H1 (cell line): ENCODE measurements at regions of chr5 and their contacts with region 1.

Region 1: GRCh38 chr5:38922199-38922598 is 76.4 kb downstream of the OSMR start:
- DNase-seq: peak in 1 of 2 experiments; percentile 64
- H3K4me3 ChIP-seq: no peak overlapping the region
- H3K27ac ChIP-seq: no peak overlapping the region
- H3K4me1 ChIP-seq: peaks cover 0 to 4% (median 2%) of the 10 kb centered on the region in 4 experiments; a peak in 2 of 7 replicates
- H3K27me3 ChIP-seq: no peaks in the 10 kb centered on the region
- CTCF ChIP-seq: peak; percentile 79 to 94 (median 94)
- EP300 ChIP-seq: no peak
- POLR2A ChIP-seq: no peak
- RAD21 ChIP-seq: peak; percentile 86 to 88

Region 2: DNA sequence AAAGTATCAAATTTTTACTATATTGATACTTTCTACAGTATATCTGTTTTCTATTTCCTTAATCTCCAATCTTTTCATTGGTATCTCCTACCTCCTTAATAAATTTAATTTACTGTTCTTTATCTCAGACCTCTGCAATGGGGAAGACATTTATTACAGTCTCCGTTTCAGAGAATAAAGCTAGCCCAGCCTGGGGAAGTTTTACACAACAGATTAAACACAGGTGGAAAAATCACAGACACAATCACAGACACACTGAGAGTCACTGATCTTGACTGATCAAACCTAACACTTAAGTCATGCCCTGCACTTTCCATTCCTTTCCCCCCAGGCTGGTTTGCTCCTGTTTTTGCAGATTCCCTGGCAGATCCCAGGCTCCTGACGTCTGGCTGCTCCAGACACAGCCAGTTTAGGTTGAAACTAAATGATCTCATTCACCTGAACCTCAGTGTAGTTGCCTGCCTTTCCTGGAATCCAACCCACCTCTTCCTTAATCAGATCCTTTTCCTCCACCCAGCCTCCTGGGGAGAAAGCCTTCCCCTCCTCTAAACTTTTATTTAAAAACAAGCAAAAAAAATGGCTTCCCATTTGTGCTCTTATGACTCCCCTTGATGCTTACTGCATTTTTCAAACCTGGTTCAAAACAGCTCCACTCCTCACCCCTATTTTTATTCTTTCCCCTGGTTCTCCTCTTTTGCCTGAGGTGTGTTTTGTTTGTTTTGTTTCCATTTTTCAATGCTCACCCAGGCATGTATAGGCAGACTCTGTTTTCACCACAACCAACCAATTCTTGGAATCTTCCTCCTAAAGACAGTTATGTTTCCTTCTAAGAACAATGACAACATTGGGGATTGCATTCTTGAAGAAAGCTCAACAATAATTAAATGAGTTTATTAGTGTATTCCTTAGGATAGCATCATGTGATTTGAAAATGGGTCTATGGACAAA is 105.8 kb before region 1 on chr5:
- CTCF ChIA-PET with region 1: interaction called, 10 read pairs
- POLR2A ChIA-PET with region 1: no interaction called
- DNase-seq: no peak
- H3K4me3 ChIP-seq: no peak overlapping the region
- H3K27ac ChIP-seq: no peak overlapping the region
- H3K4me1 ChIP-seq: peaks cover 0 to 2% (median 0%) of the 10 kb centered on the region in 4 experiments; a peak in 1 of 7 replicates
- H3K27me3 ChIP-seq: no peaks in the 10 kb centered on the region
- CTCF ChIP-seq: no peak
- EP300 ChIP-seq: no peak
- POLR2A ChIP-seq: no peak
- RAD21 ChIP-seq: no peak

Region 3: DNA sequence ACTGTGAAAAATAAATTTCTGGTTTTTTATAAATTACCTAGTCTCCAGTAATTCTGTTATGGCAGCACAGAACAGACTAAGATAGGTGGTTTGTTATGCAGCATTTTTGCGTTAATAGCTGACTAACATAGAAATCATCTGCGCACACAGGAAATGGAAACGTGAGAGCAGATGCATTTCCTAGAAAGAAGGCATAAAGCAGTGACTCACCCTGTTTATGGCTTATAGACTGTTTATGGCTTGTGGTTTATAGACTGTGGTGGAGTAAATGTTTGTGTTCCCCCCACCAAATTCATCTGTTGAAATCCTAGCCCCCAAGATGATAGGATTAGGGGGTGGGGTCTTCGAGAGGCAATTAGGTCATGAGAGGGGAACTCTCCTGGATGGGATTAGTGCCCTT is 94.7 kb before region 1 on chr5:
- CTCF ChIA-PET with region 1: interaction called, 19 read pairs
- POLR2A ChIA-PET with region 1: no interaction called
- DNase-seq: no peak
- H3K4me3 ChIP-seq: no peak overlapping the region
- H3K27ac ChIP-seq: no peak overlapping the region
- H3K4me1 ChIP-seq: no peaks in the 10 kb centered on the region
- H3K27me3 ChIP-seq: no peaks in the 10 kb centered on the region
- CTCF ChIP-seq: no peak
- EP300 ChIP-seq: no peak
- POLR2A ChIP-seq: no peak
- RAD21 ChIP-seq: no peak

Region 4: GRCh38 chr5:38837416-38837815 is 84.8 kb before region 1 on chr5:
- CTCF ChIA-PET with region 1: interaction called, 10 read pairs
- POLR2A ChIA-PET with region 1: no interaction called
- DNase-seq: no peak
- H3K4me3 ChIP-seq: no peak overlapping the region
- H3K27ac ChIP-seq: no peak overlapping the region
- H3K4me1 ChIP-seq: no peaks in the 10 kb centered on the region
- H3K27me3 ChIP-seq: no peaks in the 10 kb centered on the region
- CTCF ChIP-seq: no peak
- EP300 ChIP-seq: no peak
- POLR2A ChIP-seq: no peak
- RAD21 ChIP-seq: no peak

Region 5: GRCh38 chr5:38932854-38933408 is 10.7 kb after region 1 on chr5:
- CTCF ChIA-PET with region 1: interaction called, 12 read pairs
- POLR2A ChIA-PET with region 1: no interaction called
- DNase-seq: no peak
- H3K4me3 ChIP-seq: no peak overlapping the region
- H3K27ac ChIP-seq: no peak overlapping the region
- H3K4me1 ChIP-seq: no peaks in the 10 kb centered on the region
- H3K27me3 ChIP-seq: no peaks in the 10 kb centered on the region
- CTCF ChIP-seq: no peak
- EP300 ChIP-seq: no peak
- POLR2A ChIP-seq: no peak
- RAD21 ChIP-seq: no peak

Region 6: GRCh38 chr5:39005566-39006232 is 83.5 kb after region 1 on chr5:
- CTCF ChIA-PET with region 1: no interaction called
- POLR2A ChIA-PET with region 1: no interaction called
- DNase-seq: no peak
- H3K4me3 ChIP-seq: no peak overlapping the region
- H3K27ac ChIP-seq: no peak overlapping the region
- H3K4me1 ChIP-seq: no peaks in the 10 kb centered on the region
- H3K27me3 ChIP-seq: no peaks in the 10 kb centered on the region
- CTCF ChIP-seq: peak in 2 of 3 experiments; percentile 28 to 44; a peak in 2 of 4 replicates
- EP300 ChIP-seq: no peak
- POLR2A ChIP-seq: no peak
- RAD21 ChIP-seq: peak; percentile 64 to 66

Region 7: DNA sequence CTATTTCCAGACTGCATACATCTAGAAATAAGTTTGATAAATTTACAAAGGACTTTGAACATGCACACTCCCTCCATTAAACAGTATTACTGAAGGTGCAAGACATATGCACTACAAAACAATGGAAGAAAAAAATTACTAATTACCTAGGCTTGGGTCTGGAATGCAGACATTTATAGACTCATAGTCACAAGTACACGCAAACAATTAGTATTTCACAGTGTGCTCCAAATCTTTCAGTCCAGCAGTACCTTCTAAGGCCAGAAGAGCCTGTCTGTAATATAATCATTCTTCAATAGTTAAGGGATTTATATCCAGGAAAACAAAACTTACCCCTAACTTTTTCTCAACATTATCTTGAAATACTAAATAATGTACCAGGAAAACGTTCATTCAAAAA is 140.8 kb after region 1 on chr5:
- CTCF ChIA-PET with region 1: no interaction called
- POLR2A ChIA-PET with region 1: no interaction called
- DNase-seq: no peak
- H3K4me3 ChIP-seq: no peak overlapping the region
- H3K27ac ChIP-seq: no peak overlapping the region
- H3K4me1 ChIP-seq: peaks cover 0 to 1% (median under 1%) of the 10 kb centered on the region in 4 experiments; a peak in 2 of 7 replicates
- H3K27me3 ChIP-seq: no peaks in the 10 kb centered on the region
- CTCF ChIP-seq: no peak
- EP300 ChIP-seq: no peak
- POLR2A ChIP-seq: no peak
- RAD21 ChIP-seq: no peak